ENCODE measurements at regions of chr2 and their contacts with region 1.

Region 1: DNA sequence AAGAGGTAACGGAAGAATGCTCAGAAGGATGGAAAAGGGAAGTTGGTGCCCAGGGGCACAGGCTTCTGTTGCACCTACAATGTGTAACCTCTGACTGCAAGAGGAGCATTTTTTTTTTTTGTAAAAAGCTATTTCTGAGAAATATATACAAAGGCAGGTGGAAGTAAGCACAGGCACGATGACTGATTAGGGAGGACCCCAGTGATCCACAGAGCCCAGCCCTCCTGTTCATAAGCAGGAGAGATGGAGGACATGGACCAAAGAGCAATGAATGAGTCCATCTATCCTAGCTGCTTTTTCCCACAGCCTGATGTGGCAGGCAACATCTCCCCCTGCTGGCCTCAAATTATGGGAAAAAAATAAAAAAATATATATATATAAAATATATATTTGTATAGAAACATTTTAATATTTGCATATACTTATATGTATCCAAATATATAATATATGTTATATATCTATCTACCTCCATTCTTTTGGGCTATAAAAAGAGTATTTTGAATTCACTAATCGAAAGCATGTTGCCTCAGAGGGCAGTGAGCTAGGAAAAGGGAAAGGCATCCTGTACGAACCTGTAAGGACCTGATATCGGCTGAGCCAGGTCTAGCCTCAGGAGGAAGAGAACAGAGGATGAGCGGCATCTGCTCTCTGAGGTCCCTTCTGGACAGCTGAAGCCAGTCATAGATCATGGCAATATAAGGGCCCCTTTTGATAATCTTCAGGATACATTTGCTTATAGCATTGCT is 166.0 kb upstream of the STK17B start:
- DNase-seq: peak; percentile 74
- H3K4me3 ChIP-seq: no peak overlapping the region
- H3K27ac ChIP-seq: no peak overlapping the region
- H3K4me1 ChIP-seq: peaks cover 18% of the 10 kb centered on the region
- H3K27me3 ChIP-seq: no peaks in the 10 kb centered on the region

Region 2: GRCh38 chr2:196080526-196080925 is 256.9 kb before region 1 on chr2:
- in situ Hi-C with region 1: loop called (anchors 5 kb)
- DNase-seq: no peak
- H3K4me3 ChIP-seq: no peak overlapping the region
- H3K27ac ChIP-seq: no peak overlapping the region
- H3K4me1 ChIP-seq: peaks cover 17% of the 10 kb centered on the region
- H3K27me3 ChIP-seq: no peaks in the 10 kb centered on the region